ENCODE measurements at regions of chr16 and their contacts with region 1.

Region 1: GRCh38 chr16:11025120-11025531 is 80.8 kb downstream of the CLEC16A start:
- DNase-seq: no peak
- H3K4me3 Mint-ChIP-seq: no peak overlapping the region
- H3K27ac Mint-ChIP-seq: peak overlapping the region; percentile 82
- H3K4me1 Mint-ChIP-seq: peaks cover 31% of the 10 kb centered on the region
- H3K27me3 Mint-ChIP-seq: no peaks in the 10 kb centered on the region

Region 2: DNA sequence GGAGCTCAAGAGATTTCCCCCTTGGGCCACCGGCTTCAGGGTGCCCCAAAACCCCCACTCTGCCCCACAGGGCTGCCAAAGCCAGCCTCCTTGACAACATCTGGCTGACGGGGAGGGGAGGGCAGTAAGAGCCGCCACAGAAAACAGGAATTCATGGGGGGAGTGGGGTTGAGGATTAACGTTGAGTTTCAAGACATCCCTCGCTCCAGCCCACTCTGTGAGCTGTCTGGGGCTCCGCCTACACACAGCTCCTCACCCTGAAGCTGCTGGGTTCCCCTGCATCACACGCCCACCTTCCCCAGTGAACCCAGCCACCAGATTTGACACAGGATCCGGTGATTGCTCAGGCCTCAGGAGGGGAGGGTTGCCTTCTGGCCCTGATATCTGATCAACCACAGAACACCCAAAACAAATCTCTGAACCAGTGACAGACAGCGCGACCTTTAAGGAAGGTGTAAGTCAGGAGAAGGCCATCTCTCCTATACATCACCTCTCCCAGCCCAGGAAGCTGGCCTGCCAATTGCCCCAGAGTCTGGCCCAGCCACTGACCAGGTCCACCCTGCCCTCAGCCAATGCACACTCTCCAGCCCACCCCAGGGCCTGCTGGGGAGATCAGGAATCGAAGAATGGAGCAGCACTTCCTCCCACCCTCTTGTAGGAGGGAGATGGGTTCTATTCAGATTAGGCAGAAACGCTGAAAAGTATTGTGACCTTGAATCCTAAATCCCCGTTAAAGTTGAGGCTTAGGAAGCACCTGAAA is 51.3 kb after region 1 on chr16:
- intact Hi-C with region 1: loop called (anchors 2 kb)
- DNase-seq: peak; percentile 36
- H3K4me3 Mint-ChIP-seq: peak overlapping the region; percentile 48
- H3K27ac Mint-ChIP-seq: peak overlapping the region; percentile 90
- H3K4me1 Mint-ChIP-seq: peaks cover 94% of the 10 kb centered on the region
- H3K27me3 Mint-ChIP-seq: peaks cover 2% of the 10 kb centered on the region